ENCODE measurements at regions of chr1 and their contacts with region 1.

Region 1: GRCh38 chr1:17594690-17595600 is 55.4 kb downstream of the ARHGEF10L start:
- DNase-seq: no peak
- ATAC-seq: no peak
- H3K4me3 ChIP-seq: no peak overlapping the region
- H3K27ac ChIP-seq: no peak overlapping the region
- H3K4me1 ChIP-seq: peaks cover 15% of the 10 kb centered on the region
- H3K27me3 ChIP-seq: no peaks in the 10 kb centered on the region
- CTCF ChIP-seq: no peak

Region 2: DNA sequence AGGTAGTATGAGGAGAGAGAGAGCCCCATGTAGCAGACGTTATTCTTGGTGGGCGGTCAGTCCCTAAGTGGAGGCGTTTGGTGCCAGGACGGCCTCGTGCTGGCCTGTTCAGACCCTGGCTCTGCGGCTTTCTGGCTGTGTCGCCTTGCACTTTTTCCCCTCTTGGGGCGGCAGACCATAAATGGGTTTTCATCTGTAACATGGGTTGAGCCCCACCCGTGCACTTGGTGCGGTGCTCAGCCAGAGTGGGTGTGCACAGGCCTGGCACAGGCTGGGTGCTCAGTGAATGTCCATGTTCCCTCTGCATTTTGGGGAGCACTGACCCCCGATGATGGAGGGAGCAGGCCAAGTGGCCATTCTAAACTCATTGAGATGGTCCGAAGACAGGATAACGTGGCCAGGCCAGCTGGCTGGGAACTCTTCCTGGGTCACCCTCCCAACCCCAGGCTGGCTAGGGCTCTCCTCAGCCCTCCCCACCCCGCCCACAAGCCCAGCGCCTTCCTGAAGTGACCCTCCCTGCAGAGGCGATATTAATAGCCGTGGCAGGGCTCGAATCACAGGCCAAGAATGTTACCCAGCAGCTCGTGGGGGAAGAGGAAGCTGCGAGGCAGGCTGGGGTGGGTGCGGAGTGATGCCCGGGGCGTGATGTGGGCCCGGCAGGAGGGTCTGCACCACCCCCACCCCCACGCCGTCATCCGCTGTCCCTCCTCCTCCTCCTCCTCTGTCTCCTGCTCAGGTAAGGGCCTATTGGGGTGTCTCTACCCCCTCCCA is 23.0 kb after region 1 on chr1:
- CTCF ChIA-PET with region 1: interaction called, 11 read pairs
- POLR2A ChIA-PET with region 1: no interaction called
- in situ Hi-C with region 1: no loop called
- intact Hi-C with region 1: no loop called
- DNase-seq: no peak
- ATAC-seq: no peak
- H3K4me3 ChIP-seq: no peak overlapping the region
- H3K27ac ChIP-seq: no peak overlapping the region
- H3K4me1 ChIP-seq: no peaks in the 10 kb centered on the region
- H3K27me3 ChIP-seq: no peaks in the 10 kb centered on the region
- CTCF ChIP-seq: no peak

Region 3: GRCh38 chr1:18705811-18706210 is 1110.9 kb after region 1 on chr1:
- CTCF ChIA-PET with region 1: no interaction called
- POLR2A ChIA-PET with region 1: interaction called, 10 read pairs
- in situ Hi-C with region 1: no loop called
- intact Hi-C with region 1: no loop called
- DNase-seq: no peak
- ATAC-seq: no peak
- H3K4me3 ChIP-seq: no peak overlapping the region
- H3K27ac ChIP-seq: no peak overlapping the region
- H3K4me1 ChIP-seq: no peaks in the 10 kb centered on the region
- H3K27me3 ChIP-seq: no peaks in the 10 kb centered on the region; the same call in 1 of the 2 replicates
- CTCF ChIP-seq: no peak

Measured in Panc1 (cell line).